PC-9 (cell line): ENCODE measurements at regions of chr2 and their contacts with region 1.

Region 1: GRCh38 chr2:43977677-43978375 is 18.0 kb downstream of the LRPPRC start:
- DNase-seq: no peak
- H3K4me3 ChIP-seq: no peak overlapping the region
- H3K27ac ChIP-seq: peak overlapping the region; percentile 1; the same call in 1 of the 2 replicates
- H3K4me1 ChIP-seq: no peaks in the 10 kb centered on the region
- H3K27me3 ChIP-seq: no peaks in the 10 kb centered on the region
- CTCF ChIP-seq: no peak

Region 2: GRCh38 chr2:43898134-43898837 is 79.5 kb before region 1 on chr2:
- CTCF ChIA-PET with region 1: no interaction called
- POLR2A ChIA-PET with region 1: interaction called, 7 read pairs
- intact Hi-C with region 1: loop called (anchors 5 kb)
- DNase-seq: no peak
- H3K4me3 ChIP-seq: no peak overlapping the region
- H3K27ac ChIP-seq: no peak overlapping the region
- H3K4me1 ChIP-seq: no peaks in the 10 kb centered on the region
- H3K27me3 ChIP-seq: no peaks in the 10 kb centered on the region
- CTCF ChIP-seq: no peak